Heart left ventricle (tissue), 16 donors: ENCODE measurements at regions of chr12 and their contacts with region 1.

Region 1: GRCh38 chr12:46382964-46383653 is 10.5 kb upstream of the SLC38A2 start:
- DNase-seq: peak; percentile 98 to 99 (median 98)
- ATAC-seq: peak; percentile 92 to 95 (median 93)
- H3K4me3 ChIP-seq: peak overlapping the region; percentile 41 to 82 (median 74)
- H3K27ac ChIP-seq: peak overlapping the region; percentile 97 to 100 (median 100)
- H3K4me1 ChIP-seq: peaks cover 0 to 52% (median 42%) of the 10 kb centered on the region in 12 donors
- H3K27me3 ChIP-seq: no peaks in the 10 kb centered on the region
- CTCF ChIP-seq: peak in 8 of 12 donors; percentile 14 to 48 (median 28)
- POLR2A ChIP-seq: peak; percentile 19 to 93

Region 2: DNA sequence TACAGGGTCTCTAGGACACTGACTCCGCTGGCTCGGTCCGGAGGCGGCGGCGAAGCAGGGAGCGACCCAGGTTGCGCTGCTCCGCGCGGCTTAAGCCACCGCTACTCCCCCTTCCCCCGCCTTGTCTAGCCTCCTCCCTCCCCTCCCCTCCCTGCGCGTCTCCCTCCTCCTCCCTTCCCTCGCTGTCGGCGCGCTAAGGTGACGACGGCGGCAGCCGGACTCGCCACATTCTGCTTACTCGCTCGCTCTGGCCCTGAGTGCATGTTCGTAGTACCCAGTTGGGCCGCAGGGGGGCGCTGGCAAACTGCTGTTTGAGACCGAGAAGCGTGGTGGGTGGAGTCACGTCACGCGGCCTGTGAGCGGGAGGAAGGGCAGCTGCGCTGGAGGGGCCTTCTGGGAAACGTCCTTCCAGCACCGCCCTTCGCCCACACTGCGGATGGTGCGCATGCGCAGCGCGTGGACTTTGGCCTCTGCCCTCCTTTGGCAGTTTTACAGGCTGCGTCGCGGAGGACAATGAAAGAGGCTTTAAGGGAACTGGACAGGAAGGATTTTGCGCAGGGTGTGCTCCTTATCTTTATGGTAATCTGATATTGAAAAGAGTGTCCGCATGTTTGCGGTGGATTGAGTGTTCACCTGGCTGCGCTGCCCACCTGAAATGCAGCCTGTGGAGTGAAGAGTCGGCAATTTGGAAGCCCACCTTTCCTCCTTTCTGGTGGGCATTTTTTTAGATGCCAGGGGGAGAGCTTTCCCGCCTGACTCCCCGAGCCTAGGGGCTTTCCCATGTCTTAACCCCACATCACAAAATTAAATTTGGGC is 392.4 kb before region 1 on chr12 and contains the start of gene SCAF11:
- intact Hi-C with region 1: loop called in 2 of 10 experiments (anchors 10 kb)
- DNase-seq: peak; percentile 100
- ATAC-seq: peak; percentile 90 to 96 (median 94)
- H3K4me3 ChIP-seq: peak within 1 kb of the TSS; percentile 73 to 98 (median 90)
- H3K27ac ChIP-seq: peak within 1 kb of the TSS; percentile 96 to 100 (median 99)
- H3K4me1 ChIP-seq: peaks cover 0 to 48% (median 35%) of the 10 kb centered on the region in 12 donors
- H3K27me3 ChIP-seq: no peaks in the 10 kb centered on the region
- CTCF ChIP-seq: peak; percentile 91 to 99 (median 94)
- POLR2A ChIP-seq: peak; percentile 66 to 75
- total RNA-seq, gene SCAF11: 71.3 to 148 (median 98.7) TPM

Region 3: DNA sequence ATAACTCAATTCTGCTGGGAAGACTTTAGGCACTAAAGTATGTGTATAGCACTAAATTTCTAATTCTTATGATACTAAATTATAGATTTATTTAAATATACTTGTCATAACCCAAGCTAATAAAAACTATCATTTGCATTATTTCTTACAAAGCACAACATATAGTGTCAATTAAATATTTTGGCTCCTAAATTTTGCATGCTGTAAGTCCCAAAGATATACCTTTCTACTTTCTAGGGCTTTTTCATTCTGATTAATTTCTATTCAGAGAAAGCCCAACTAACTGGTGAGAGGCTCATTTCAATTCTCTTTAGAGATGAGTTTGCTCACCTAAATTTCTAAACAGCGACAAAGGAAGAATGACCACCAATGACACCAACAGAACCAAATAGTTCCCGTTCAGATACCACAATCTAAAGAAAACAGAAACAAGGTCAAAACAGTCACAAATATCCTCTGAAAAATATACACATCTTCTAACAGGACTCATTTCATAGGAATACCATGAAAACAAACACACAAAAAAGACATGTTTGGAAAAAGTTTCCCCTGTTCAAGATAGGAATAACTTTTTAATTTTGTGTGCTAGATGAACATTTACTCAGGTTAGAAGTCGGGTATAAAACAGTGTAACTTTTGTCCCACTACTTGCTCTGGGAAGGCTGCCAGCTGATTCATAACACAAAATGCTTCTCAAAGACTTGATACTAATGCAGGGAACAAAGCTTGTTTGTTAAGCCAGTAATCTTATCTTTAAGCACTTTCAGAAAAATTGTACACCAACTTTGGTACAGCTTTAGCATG is 18.1 kb before region 1 on chr12:
- intact Hi-C with region 1: no loop called
- DNase-seq: peak in 4 of 5 donors; percentile 60 to 72 (median 66)
- ATAC-seq: peak; percentile 57 to 70 (median 62)
- H3K4me3 ChIP-seq: peak overlapping the region in 7 of 12 donors; percentile 0 to 34 (median 14)
- H3K27ac ChIP-seq: peak overlapping the region in 10 of 12 donors; percentile 14 to 55 (median 37)
- H3K4me1 ChIP-seq: peaks cover 10 to 96% (median 73%) of the 10 kb centered on the region in 12 donors
- H3K27me3 ChIP-seq: no peaks in the 10 kb centered on the region
- CTCF ChIP-seq: no peak
- POLR2A ChIP-seq: no peak

Region 4: DNA sequence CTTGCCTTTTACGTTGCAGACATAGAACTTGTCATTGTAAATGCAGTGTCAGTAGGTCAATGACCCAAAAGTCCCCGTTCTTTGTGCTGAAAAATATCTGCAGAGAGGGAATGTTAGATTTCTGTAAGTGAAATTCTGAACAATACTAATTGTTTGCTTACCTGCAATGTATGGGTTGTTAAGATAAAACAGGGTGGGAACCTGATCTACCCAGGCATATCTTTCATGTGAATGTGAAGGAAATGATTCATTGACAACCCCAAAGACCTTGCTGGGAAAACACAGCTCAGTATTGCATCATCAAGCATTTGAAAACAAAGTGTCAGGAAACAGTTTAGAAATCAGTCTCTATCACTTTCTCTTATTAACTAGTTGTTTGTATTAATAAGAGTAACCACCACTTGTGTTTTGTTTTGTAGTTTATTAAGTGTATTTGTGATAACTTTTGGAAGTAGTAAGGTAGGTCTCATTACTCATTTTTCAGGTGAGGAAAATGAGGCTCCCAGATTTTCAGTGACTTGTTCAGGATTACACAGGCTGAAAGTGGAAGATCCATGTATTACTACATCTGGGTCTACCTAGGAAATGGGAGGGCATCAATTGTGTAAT is 47.3 kb after region 1 on chr12:
- intact Hi-C with region 1: loop called in 3 of 10 experiments (anchors 5 kb)
- DNase-seq: no peak
- ATAC-seq: peak in 3 of 4 donors; percentile 75 to 81 (median 80)
- H3K4me3 ChIP-seq: no peak overlapping the region
- H3K27ac ChIP-seq: peak overlapping the region in 11 of 12 donors; percentile 10 to 81 (median 46)
- H3K4me1 ChIP-seq: peaks cover 0 to 31% (median 23%) of the 10 kb centered on the region in 12 donors
- H3K27me3 ChIP-seq: no peaks in the 10 kb centered on the region
- CTCF ChIP-seq: no peak
- POLR2A ChIP-seq: no peak

Region 5: DNA sequence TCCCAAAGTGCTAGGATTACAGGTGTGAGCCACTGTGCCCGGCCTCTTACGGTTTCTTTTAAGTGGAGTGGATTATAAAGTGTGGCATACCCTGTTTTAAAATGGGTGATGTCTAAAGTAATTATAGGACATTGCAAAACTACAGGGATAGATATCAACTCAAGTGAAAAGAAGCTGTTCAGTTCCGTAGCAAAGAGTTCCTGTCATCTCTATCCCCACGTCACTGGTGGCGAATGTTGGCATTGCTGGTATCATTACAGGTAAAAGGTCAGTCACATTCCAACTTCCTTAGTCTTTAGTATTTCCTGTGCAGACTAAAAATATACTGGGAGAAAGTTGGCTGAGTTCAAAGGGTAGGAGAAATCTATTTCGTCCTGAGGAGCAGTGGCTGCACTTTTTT is 85.0 kb after region 1 on chr12:
- intact Hi-C with region 1: loop called in 7 of 10 experiments (anchors 1 to 10 kb)
- DNase-seq: peak in 3 of 5 donors; percentile 60 to 83 (median 63)
- ATAC-seq: peak; percentile 78 to 95 (median 93)
- H3K4me3 ChIP-seq: no peak overlapping the region
- H3K27ac ChIP-seq: peak overlapping the region in 11 of 12 donors; percentile 9 to 74 (median 56)
- H3K4me1 ChIP-seq: peaks cover 0 to 54% (median 32%) of the 10 kb centered on the region in 12 donors
- H3K27me3 ChIP-seq: no peaks in the 10 kb centered on the region
- CTCF ChIP-seq: peak in 2 of 12 donors; percentile 6 to 21
- POLR2A ChIP-seq: no peak

Region 6: DNA sequence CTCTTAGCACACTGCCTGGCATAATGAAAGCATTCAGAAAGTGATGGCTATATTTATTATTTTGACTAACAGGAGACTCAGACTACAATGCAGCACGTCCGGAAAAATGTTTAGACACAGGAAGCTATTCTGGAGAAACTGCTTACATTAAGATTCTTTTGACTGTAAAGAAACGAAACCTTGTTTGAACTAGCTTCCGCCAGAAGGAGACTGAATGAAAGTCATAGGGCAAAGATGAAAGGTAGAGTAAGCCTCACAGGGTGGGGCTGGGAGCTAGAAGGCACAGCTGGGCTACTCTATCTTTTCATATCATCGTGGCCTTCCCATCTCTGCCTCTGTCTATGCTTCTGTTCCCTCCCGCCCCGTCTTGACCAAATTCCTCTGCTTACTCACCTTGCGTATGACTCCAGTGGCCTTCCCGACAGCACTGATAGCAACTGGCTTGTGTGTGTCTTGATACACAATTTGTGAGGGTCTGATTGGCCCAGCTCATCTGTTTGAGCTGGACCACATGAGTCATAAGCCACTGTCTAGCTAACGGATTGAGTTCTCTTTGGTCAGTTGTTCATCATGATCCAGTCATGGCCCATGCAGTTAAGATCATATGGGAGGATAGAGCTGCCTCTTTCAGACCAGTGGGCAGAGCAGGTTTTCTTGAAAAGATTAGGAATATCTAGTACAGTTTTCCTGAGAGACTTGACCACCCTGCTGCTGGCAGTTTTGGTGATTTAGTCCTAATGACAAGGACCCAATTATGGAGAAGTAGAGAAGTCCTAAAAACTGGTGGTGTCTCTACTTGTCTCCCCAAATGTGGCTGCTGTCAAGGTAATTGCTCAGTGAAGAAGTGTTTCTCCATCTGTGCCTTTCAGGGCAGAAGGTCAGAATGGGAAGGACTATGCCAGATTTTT is 141.0 kb after region 1 on chr12:
- intact Hi-C with region 1: loop called in 1 of 10 experiments (anchors 10 kb)
- DNase-seq: peak in 1 of 5 donors; percentile 39
- ATAC-seq: peak in 1 of 4 donors; percentile 48
- H3K4me3 ChIP-seq: no peak overlapping the region
- H3K27ac ChIP-seq: peak overlapping the region; percentile 24 to 87 (median 77)
- H3K4me1 ChIP-seq: peaks cover 0 to 50% (median 31%) of the 10 kb centered on the region in 12 donors
- H3K27me3 ChIP-seq: no peaks in the 10 kb centered on the region
- CTCF ChIP-seq: no peak
- POLR2A ChIP-seq: no peak

Region 7: DNA sequence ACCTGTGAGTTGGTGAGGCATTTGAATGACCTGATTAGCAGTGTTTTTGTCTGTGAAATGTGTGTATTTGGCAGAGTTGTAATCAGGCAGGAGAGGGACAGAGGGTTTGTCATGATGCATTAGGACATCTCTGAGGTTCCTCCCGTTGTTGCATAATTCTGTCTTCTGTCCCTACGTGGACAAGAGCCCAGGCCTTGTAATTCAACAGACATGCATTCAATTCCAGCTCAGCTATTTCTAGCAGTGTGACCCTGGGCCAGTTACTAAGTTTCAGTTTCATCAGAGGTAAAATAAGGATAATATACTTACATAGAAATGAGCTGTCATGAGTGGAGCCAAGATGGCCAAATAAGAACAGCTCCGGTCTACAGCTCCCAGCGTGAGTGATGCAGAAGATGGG is 234.1 kb after region 1 on chr12:
- intact Hi-C with region 1: loop called in 1 of 10 experiments (anchors 2 kb)
- DNase-seq: peak in 4 of 5 donors; percentile 20 to 54 (median 44)
- ATAC-seq: peak; percentile 95 to 100 (median 99)
- H3K4me3 ChIP-seq: no peak overlapping the region
- H3K27ac ChIP-seq: peak overlapping the region in 10 of 12 donors; percentile 1 to 72 (median 46)
- H3K4me1 ChIP-seq: peaks cover 0 to 17% (median 1%) of the 10 kb centered on the region in 12 donors
- H3K27me3 ChIP-seq: no peaks in the 10 kb centered on the region
- CTCF ChIP-seq: no peak
- POLR2A ChIP-seq: no peak